T-cell (primary cell): ENCODE measurements at regions of chr21 and their contacts with region 1.

Region 1: DNA sequence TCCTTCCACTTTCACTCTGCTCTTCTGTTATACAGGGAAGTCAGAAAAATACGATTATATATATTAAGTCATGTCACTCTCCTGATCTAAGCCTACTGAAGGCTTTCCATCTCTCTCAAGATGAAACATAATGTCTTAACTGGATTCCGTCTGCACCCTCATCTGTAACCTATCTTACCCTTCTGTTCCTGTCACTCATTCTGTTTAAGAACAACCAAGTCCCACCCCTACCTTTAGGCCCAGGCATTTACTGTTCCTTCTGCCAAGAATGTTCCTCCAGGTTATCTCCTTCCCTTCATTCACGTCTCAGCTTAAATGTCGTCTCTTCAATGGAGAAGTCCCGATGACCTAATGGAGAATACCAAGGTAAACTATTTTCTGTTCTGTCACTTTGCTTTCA is 1802.4 kb downstream of the MRPL39 start:
- DNase-seq: no peak
- ATAC-seq: no peak
- H3K4me3 ChIP-seq: no peak overlapping the region
- H3K4me3 Mint-ChIP-seq: no peak overlapping the region
- H3K27ac ChIP-seq: no peak overlapping the region
- H3K27ac Mint-ChIP-seq: no peak overlapping the region
- H3K4me1 ChIP-seq: no peaks in the 10 kb centered on the region
- H3K4me1 Mint-ChIP-seq: no peaks in the 10 kb centered on the region
- H3K27me3 ChIP-seq: no peaks in the 10 kb centered on the region
- H3K27me3 Mint-ChIP-seq: no peaks in the 10 kb centered on the region

Region 2: GRCh38 chr21:23601549-23601948 is 203.3 kb before region 1 on chr21:
- CTCF ChIA-PET with region 1: interaction called in 1 of 2 experiments, 12 read pairs
- POLR2A ChIA-PET with region 1: no interaction called
- DNase-seq: no peak
- ATAC-seq: no peak
- H3K4me3 ChIP-seq: no peak overlapping the region
- H3K4me3 Mint-ChIP-seq: no peak overlapping the region
- H3K27ac ChIP-seq: no peak overlapping the region
- H3K27ac Mint-ChIP-seq: no peak overlapping the region
- H3K4me1 ChIP-seq: no peaks in the 10 kb centered on the region
- H3K4me1 Mint-ChIP-seq: no peaks in the 10 kb centered on the region
- H3K27me3 ChIP-seq: no peaks in the 10 kb centered on the region
- H3K27me3 Mint-ChIP-seq: no peaks in the 10 kb centered on the region

Region 3: DNA sequence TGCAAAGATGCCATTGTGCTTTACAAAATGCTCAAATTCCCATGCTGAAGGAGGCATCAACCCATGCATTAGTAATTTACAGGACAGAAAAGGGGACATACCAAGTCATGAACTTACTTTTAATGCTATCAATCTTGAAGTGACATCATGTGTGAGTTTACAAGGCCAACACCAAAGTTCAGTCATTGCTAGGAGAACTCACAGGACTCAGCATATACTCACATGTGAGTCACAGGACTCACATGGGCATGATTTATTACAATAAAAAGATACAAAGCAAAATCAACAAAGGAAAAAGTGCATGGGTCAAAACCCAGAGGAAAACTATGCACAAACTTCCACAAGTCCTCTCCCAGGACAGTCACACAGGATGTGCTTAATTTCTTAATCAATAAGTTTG is 146.4 kb after region 1 on chr21:
- CTCF ChIA-PET with region 1: no interaction called
- POLR2A ChIA-PET with region 1: no interaction called
- DNase-seq: no peak
- ATAC-seq: no peak
- H3K4me3 ChIP-seq: no peak overlapping the region
- H3K4me3 Mint-ChIP-seq: no peak overlapping the region
- H3K27ac ChIP-seq: no peak overlapping the region
- H3K27ac Mint-ChIP-seq: no peak overlapping the region
- H3K4me1 ChIP-seq: peaks cover 0 to 22% of the 10 kb centered on the region in 2 experiments
- H3K4me1 Mint-ChIP-seq: peaks cover 29 to 35% (median 30%) of the 10 kb centered on the region in 3 donors
- H3K27me3 ChIP-seq: no peaks in the 10 kb centered on the region
- H3K27me3 Mint-ChIP-seq: no peaks in the 10 kb centered on the region